ENCODE measurements at regions of chr11 and their contacts with region 1.

Region 1: GRCh38 chr11:26297189-26297975 is 34.5 kb upstream of the ANO3 start:
- DNase-seq: peak; percentile 39
- H3K4me3 ChIP-seq: no peak overlapping the region
- H3K27ac ChIP-seq: no peak overlapping the region
- H3K27me3 ChIP-seq: no peaks in the 10 kb centered on the region
- CTCF ChIP-seq: peak; percentile 72

Region 2: GRCh38 chr11:26247340-26247739 is 50.0 kb before region 1 on chr11:
- CTCF ChIA-PET with region 1: no interaction called
- POLR2A ChIA-PET with region 1: no interaction called
- DNase-seq: no peak
- H3K4me3 ChIP-seq: no peak overlapping the region
- H3K27ac ChIP-seq: no peak overlapping the region
- H3K27me3 ChIP-seq: no peaks in the 10 kb centered on the region
- CTCF ChIP-seq: no peak

Region 3: GRCh38 chr11:26348756-26349155 is 51.4 kb after region 1 on chr11:
- CTCF ChIA-PET with region 1: no interaction called
- POLR2A ChIA-PET with region 1: no interaction called
- DNase-seq: no peak
- H3K4me3 ChIP-seq: no peak overlapping the region
- H3K27ac ChIP-seq: no peak overlapping the region
- H3K27me3 ChIP-seq: no peaks in the 10 kb centered on the region
- CTCF ChIP-seq: no peak

Region 4: GRCh38 chr11:26551186-26551801 is 253.9 kb after region 1 on chr11:
- CTCF ChIA-PET with region 1: interaction called, 23 read pairs
- POLR2A ChIA-PET with region 1: no interaction called
- DNase-seq: no peak
- H3K4me3 ChIP-seq: no peak overlapping the region
- H3K27ac ChIP-seq: no peak overlapping the region
- H3K27me3 ChIP-seq: no peaks in the 10 kb centered on the region
- CTCF ChIP-seq: peak; percentile 65

Region 5: DNA sequence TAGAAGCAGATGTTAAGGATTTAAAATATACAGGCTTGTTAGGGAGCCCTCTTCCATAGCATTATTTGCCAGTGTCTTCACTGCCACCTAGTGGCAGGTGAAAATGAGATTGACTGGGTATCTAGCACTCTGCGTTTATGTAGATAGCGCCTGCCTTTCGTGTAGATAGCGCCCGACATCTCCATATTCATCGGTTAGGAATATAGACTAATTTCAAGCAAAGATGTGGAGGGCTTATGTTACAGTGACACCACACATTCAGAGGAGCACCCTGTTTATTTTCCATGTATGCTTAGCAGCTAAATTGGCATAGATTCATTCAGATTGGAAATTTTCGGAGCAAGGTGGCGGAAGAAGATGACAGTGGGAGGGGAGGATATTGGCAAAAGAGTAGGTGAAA is 352.5 kb after region 1 on chr11:
- CTCF ChIA-PET with region 1: interaction called, 27 read pairs
- POLR2A ChIA-PET with region 1: no interaction called
- DNase-seq: peak; percentile 32
- H3K4me3 ChIP-seq: no peak overlapping the region
- H3K27ac ChIP-seq: no peak overlapping the region
- H3K27me3 ChIP-seq: no peaks in the 10 kb centered on the region
- CTCF ChIP-seq: peak; percentile 84

Measured in AG04450 (cell line).